ENCODE measurements at regions of chr5 and their contacts with region 1.

Region 1: DNA sequence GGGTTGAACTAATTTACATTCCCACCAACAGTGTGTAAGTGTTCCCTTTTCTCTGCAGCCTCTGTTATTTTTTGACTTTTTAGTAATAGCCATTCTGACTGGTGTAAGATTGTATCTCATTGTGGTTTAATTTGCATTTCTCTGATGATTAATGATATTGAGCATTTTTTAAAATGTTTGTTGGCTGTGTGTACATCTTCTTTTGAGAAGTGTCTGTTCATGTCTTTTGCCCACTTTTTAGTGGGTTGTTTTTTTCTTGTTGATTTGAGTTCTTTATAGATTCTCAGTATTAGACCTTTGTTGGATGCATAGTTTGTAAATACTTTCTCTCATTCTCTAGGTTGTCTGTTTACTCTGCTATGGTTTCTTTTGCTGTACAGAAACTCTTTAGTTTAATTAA is 101.6 kb downstream of the NIPBL start:
- DNase-seq: no peak
- ATAC-seq: no peak
- H3K4me3 ChIP-seq: no peak overlapping the region
- H3K4me3 Mint-ChIP-seq: no peak overlapping the region
- H3K27ac ChIP-seq: no peak overlapping the region
- H3K27ac Mint-ChIP-seq: no peak overlapping the region
- H3K4me1 ChIP-seq: peaks cover 5% of the 10 kb centered on the region
- H3K4me1 Mint-ChIP-seq: peaks cover 55% of the 10 kb centered on the region
- H3K27me3 ChIP-seq: no peaks in the 10 kb centered on the region
- H3K27me3 Mint-ChIP-seq: no peaks in the 10 kb centered on the region
- CTCF ChIP-seq: no peak

Region 2: GRCh38 chr5:36866174-36866573 is 112.0 kb before region 1 on chr5:
- CTCF ChIA-PET with region 1: no interaction called
- POLR2A ChIA-PET with region 1: no interaction called
- intact Hi-C with region 1: no loop called
- DNase-seq: no peak
- ATAC-seq: no peak
- H3K4me3 ChIP-seq: no peak overlapping the region
- H3K4me3 Mint-ChIP-seq: no peak overlapping the region
- H3K27ac ChIP-seq: no peak overlapping the region
- H3K27ac Mint-ChIP-seq: no peak overlapping the region
- H3K4me1 ChIP-seq: peaks cover 6% of the 10 kb centered on the region
- H3K4me1 Mint-ChIP-seq: peaks cover 10% of the 10 kb centered on the region
- H3K27me3 ChIP-seq: no peaks in the 10 kb centered on the region
- H3K27me3 Mint-ChIP-seq: no peaks in the 10 kb centered on the region
- CTCF ChIP-seq: no peak

Region 3: GRCh38 chr5:37015795-37016666 is 37.8 kb after region 1 on chr5:
- CTCF ChIA-PET with region 1: no interaction called
- POLR2A ChIA-PET with region 1: interaction called, 3 read pairs
- intact Hi-C with region 1: loop called in 1 of 2 experiments (anchors 5 kb)
- DNase-seq: no peak
- ATAC-seq: no peak
- H3K4me3 ChIP-seq: no peak overlapping the region
- H3K4me3 Mint-ChIP-seq: no peak overlapping the region
- H3K27ac ChIP-seq: no peak overlapping the region
- H3K27ac Mint-ChIP-seq: no peak overlapping the region
- H3K4me1 ChIP-seq: no peaks in the 10 kb centered on the region
- H3K4me1 Mint-ChIP-seq: no peaks in the 10 kb centered on the region
- H3K27me3 ChIP-seq: no peaks in the 10 kb centered on the region
- H3K27me3 Mint-ChIP-seq: no peaks in the 10 kb centered on the region
- CTCF ChIP-seq: no peak

Measured in CD8-positive, alpha-beta T cell (primary cell).